Panc1 (cell line): ENCODE measurements at regions of chr12 and their contacts with region 1.

Region 1: GRCh38 chr12:53344824-53345485 is 8.8 kb upstream of the SP7 start:
- DNase-seq: no peak
- ATAC-seq: peak; percentile 90
- H3K4me3 ChIP-seq: peak overlapping the region; percentile 60 to 86
- H3K27ac ChIP-seq: peak overlapping the region; percentile 64
- H3K4me1 ChIP-seq: peaks cover 10% of the 10 kb centered on the region; the same call in 1 of the 2 replicates
- H3K27me3 ChIP-seq: no peaks in the 10 kb centered on the region
- CTCF ChIP-seq: peak; percentile 91

Region 2: GRCh38 chr12:53200458-53201176 is 144.3 kb before region 1 on chr12:
- CTCF ChIA-PET with region 1: no interaction called
- POLR2A ChIA-PET with region 1: no interaction called
- in situ Hi-C with region 1: no loop called
- intact Hi-C with region 1: no loop called
- DNase-seq: no peak
- ATAC-seq: no peak
- H3K4me3 ChIP-seq: no peak overlapping the region
- H3K27ac ChIP-seq: no peak overlapping the region
- H3K4me1 ChIP-seq: no peaks in the 10 kb centered on the region
- H3K27me3 ChIP-seq: no peaks in the 10 kb centered on the region
- CTCF ChIP-seq: no peak

Region 3: GRCh38 chr12:53327435-53328042 is 17.4 kb before region 1 on chr12:
- CTCF ChIA-PET with region 1: interaction called, 19 read pairs
- POLR2A ChIA-PET with region 1: no interaction called
- in situ Hi-C with region 1: no loop called
- intact Hi-C with region 1: no loop called
- DNase-seq: no peak
- ATAC-seq: no peak
- H3K4me3 ChIP-seq: no peak overlapping the region
- H3K27ac ChIP-seq: no peak overlapping the region
- H3K4me1 ChIP-seq: peaks cover 11% of the 10 kb centered on the region
- H3K27me3 ChIP-seq: no peaks in the 10 kb centered on the region
- CTCF ChIP-seq: no peak; the same call in 1 of the 2 replicates

Region 4: DNA sequence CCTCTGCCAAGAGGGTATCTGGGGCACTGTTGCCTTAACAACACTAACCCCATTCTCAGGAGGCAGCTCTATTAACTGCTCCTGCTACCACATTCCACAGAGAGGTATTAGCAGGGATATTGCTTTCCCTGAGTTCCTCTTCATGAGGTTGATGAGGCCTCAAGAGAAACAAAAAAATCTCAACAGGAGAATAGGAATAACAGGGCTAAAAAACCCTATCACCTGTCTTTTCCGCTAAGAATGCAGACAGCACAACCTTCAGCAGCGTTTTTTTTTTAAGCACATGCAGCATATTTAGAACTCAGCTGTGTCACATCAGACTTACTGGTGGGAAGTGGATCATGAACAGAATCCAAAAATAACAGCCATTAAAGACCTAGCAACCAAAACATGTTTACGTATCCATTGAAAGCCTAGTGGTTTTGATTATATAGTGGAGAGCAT is 252.0 kb after region 1 on chr12:
- CTCF ChIA-PET with region 1: no interaction called
- POLR2A ChIA-PET with region 1: no interaction called
- in situ Hi-C with region 1: no loop called
- intact Hi-C with region 1: no loop called
- DNase-seq: no peak
- ATAC-seq: peak; percentile 43; the same call in 1 of the 2 replicates
- H3K4me3 ChIP-seq: no peak overlapping the region
- H3K27ac ChIP-seq: no peak overlapping the region
- H3K4me1 ChIP-seq: peaks cover 20% of the 10 kb centered on the region
- H3K27me3 ChIP-seq: no peaks in the 10 kb centered on the region
- CTCF ChIP-seq: no peak